Activated CD4-positive, alpha-beta memory T cell treated with anti-CD3 and anti-CD28 coated beads for 36 hours (primary cell): ENCODE measurements at regions of chr10 and their contacts with region 1.

Region 1: GRCh38 chr10:69464801-69465401 is 13.6 kb downstream of the TSPAN15 start:
- DNase-seq: peak; percentile 16
- H3K4me3 Mint-ChIP-seq: no peak overlapping the region
- H3K27ac Mint-ChIP-seq: peak overlapping the region; percentile 62
- H3K4me1 Mint-ChIP-seq: peaks cover 28% of the 10 kb centered on the region
- H3K27me3 Mint-ChIP-seq: no peaks in the 10 kb centered on the region

Region 2: GRCh38 chr10:69451209-69451783 is 13.6 kb before region 1 on chr10 and contains the start of gene TSPAN15:
- CTCF ChIA-PET with region 1: interaction called, 19 read pairs
- POLR2A ChIA-PET with region 1: interaction called, 3 read pairs
- intact Hi-C with region 1: no loop called
- DNase-seq: peak; percentile 88
- H3K4me3 Mint-ChIP-seq: peak within 1 kb of the TSS; percentile 82
- H3K27ac Mint-ChIP-seq: no peak within 1 kb of the TSS
- H3K4me1 Mint-ChIP-seq: peaks cover 14% of the 10 kb centered on the region
- H3K27me3 Mint-ChIP-seq: no peaks in the 10 kb centered on the region
- total RNA-seq, gene TSPAN15: 2.5 to 3.1 TPM

Region 3: GRCh38 chr10:69845574-69846292 is 380.8 kb after region 1 on chr10:
- CTCF ChIA-PET with region 1: no interaction called
- POLR2A ChIA-PET with region 1: no interaction called
- intact Hi-C with region 1: no loop called
- DNase-seq: no peak
- H3K4me3 Mint-ChIP-seq: no peak overlapping the region
- H3K27ac Mint-ChIP-seq: no peak overlapping the region
- H3K4me1 Mint-ChIP-seq: peaks cover 4% of the 10 kb centered on the region
- H3K27me3 Mint-ChIP-seq: peaks cover 26% of the 10 kb centered on the region